ENCODE measurements at regions of chr14 and their contacts with region 1.

Region 1: GRCh38 chr14:71021347-71022014 is 114.2 kb downstream of the PCNX1 start:
- DNase-seq: no peak
- ATAC-seq: peak; percentile 86
- H3K4me3 Mint-ChIP-seq: peak overlapping the region; percentile 4
- H3K27ac Mint-ChIP-seq: peak overlapping the region; percentile 68
- H3K4me1 Mint-ChIP-seq: peaks cover 33% of the 10 kb centered on the region
- H3K27me3 Mint-ChIP-seq: no peaks in the 10 kb centered on the region

Region 2: DNA sequence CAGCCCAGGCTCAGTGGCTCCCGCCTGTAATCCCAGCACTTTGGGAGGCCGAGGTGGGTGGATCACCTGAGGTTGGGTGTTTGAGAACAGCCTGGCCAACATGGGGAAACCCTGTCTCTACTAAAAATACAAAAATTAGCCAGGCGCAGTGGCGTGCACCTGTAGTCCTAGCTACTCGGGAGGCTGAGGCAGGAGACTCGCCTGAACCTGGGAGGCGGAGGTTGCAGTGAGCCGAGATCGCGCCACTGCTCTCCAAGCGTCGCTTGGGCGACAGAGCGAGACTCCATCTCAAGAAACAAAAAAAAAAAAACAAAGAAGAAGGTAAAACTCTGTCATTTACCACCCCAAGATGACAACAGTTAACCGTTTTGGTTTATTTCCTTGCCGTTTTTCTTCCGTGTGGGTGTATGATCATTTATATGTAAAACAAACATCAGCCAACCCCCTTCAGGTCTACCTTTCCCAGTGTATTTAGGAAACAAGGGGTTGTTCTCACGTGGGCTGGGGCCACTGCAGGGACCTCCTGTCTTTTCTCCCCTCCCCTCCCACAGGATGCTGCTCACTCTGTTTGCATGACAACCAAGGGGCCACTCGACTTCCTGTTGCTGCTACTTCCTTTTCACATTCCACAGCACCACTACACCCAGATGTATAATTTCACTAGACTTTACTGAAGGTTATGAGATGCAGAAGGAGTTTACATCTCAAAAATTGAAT is 366.2 kb before region 1 on chr14:
- CTCF ChIA-PET with region 1: no interaction called
- POLR2A ChIA-PET with region 1: no interaction called
- intact Hi-C with region 1: loop called in 1 of 2 experiments (anchors 5 kb)
- DNase-seq: peak; percentile 82
- ATAC-seq: peak; percentile 80
- H3K4me3 Mint-ChIP-seq: peak overlapping the region; percentile 76
- H3K27ac Mint-ChIP-seq: peak overlapping the region; percentile 99
- H3K4me1 Mint-ChIP-seq: peaks cover 90% of the 10 kb centered on the region
- H3K27me3 Mint-ChIP-seq: no peaks in the 10 kb centered on the region

Region 3: GRCh38 chr14:70901269-70901668 is 120.2 kb before region 1 on chr14:
- CTCF ChIA-PET with region 1: interaction called, 4 read pairs
- POLR2A ChIA-PET with region 1: no interaction called
- intact Hi-C with region 1: loop called in 1 of 2 experiments (anchors 1 kb)
- DNase-seq: no peak
- ATAC-seq: no peak
- H3K4me3 Mint-ChIP-seq: no peak overlapping the region
- H3K27ac Mint-ChIP-seq: peak overlapping the region; percentile 48
- H3K4me1 Mint-ChIP-seq: peaks cover 62% of the 10 kb centered on the region
- H3K27me3 Mint-ChIP-seq: peaks cover 5% of the 10 kb centered on the region

Region 4: GRCh38 chr14:70919774-70920173 is 101.7 kb before region 1 on chr14:
- CTCF ChIA-PET with region 1: no interaction called
- POLR2A ChIA-PET with region 1: no interaction called
- intact Hi-C with region 1: loop called in 1 of 2 experiments (anchors 5 kb)
- DNase-seq: peak; percentile 38
- ATAC-seq: peak; percentile 35
- H3K4me3 Mint-ChIP-seq: peak overlapping the region; percentile 13
- H3K27ac Mint-ChIP-seq: peak overlapping the region; percentile 68
- H3K4me1 Mint-ChIP-seq: peaks cover 85% of the 10 kb centered on the region
- H3K27me3 Mint-ChIP-seq: no peaks in the 10 kb centered on the region

Region 5: DNA sequence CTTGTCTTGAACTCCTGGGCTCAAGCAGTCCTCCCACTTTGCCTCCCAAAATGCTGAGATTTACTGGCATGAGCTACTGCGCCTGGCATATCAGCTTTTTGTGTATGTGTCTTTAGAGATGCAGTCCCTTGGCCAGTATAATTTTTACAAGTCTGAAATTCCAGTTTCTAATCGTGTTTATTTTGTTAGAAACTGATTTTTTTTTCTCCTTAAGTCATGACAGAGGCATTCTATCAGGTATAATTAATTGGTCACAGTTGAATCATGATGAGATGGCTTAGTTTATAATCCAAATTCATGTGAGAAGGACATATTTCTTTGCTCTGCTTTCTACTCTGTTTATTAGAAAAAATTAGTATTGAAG is 15.3 kb before region 1 on chr14:
- CTCF ChIA-PET with region 1: interaction called, 19 read pairs
- POLR2A ChIA-PET with region 1: no interaction called
- intact Hi-C with region 1: loop called in 1 of 2 experiments (anchors 1 kb)
- DNase-seq: no peak
- ATAC-seq: no peak
- H3K4me3 Mint-ChIP-seq: no peak overlapping the region
- H3K27ac Mint-ChIP-seq: no peak overlapping the region
- H3K4me1 Mint-ChIP-seq: peaks cover 68% of the 10 kb centered on the region
- H3K27me3 Mint-ChIP-seq: no peaks in the 10 kb centered on the region

Region 6: GRCh38 chr14:71011479-71011878 is 10.0 kb before region 1 on chr14:
- CTCF ChIA-PET with region 1: interaction called, 19 read pairs
- POLR2A ChIA-PET with region 1: no interaction called
- intact Hi-C with region 1: loop called in 1 of 2 experiments (anchors 1 kb)
- DNase-seq: no peak
- ATAC-seq: peak; percentile 42
- H3K4me3 Mint-ChIP-seq: no peak overlapping the region
- H3K27ac Mint-ChIP-seq: no peak overlapping the region
- H3K4me1 Mint-ChIP-seq: peaks cover 33% of the 10 kb centered on the region
- H3K27me3 Mint-ChIP-seq: no peaks in the 10 kb centered on the region

Region 7: DNA sequence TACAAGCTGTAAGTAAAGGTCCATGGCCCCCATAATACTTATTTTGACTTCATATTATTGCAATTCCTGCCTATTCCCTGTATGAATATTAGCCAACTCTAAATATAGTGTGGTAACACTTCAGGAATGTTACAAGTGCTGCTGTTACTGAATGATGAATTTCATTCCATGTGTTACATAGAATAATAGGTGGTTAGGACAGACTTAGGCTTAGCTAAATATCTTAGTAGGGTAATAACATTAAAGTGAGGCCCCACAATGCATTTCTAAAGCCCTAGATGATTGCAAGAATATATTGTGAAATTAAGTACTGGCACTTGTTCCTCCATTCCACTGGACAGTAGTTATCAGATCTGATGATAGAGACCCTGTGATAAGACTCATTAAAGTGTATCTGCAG is 68.5 kb after region 1 on chr14:
- CTCF ChIA-PET with region 1: no interaction called
- POLR2A ChIA-PET with region 1: no interaction called
- intact Hi-C with region 1: no loop called
- DNase-seq: no peak
- ATAC-seq: no peak
- H3K4me3 Mint-ChIP-seq: no peak overlapping the region
- H3K27ac Mint-ChIP-seq: no peak overlapping the region
- H3K4me1 Mint-ChIP-seq: no peaks in the 10 kb centered on the region
- H3K27me3 Mint-ChIP-seq: no peaks in the 10 kb centered on the region